ENCODE measurements at regions of chr10 and their contacts with region 1.

Region 1: DNA sequence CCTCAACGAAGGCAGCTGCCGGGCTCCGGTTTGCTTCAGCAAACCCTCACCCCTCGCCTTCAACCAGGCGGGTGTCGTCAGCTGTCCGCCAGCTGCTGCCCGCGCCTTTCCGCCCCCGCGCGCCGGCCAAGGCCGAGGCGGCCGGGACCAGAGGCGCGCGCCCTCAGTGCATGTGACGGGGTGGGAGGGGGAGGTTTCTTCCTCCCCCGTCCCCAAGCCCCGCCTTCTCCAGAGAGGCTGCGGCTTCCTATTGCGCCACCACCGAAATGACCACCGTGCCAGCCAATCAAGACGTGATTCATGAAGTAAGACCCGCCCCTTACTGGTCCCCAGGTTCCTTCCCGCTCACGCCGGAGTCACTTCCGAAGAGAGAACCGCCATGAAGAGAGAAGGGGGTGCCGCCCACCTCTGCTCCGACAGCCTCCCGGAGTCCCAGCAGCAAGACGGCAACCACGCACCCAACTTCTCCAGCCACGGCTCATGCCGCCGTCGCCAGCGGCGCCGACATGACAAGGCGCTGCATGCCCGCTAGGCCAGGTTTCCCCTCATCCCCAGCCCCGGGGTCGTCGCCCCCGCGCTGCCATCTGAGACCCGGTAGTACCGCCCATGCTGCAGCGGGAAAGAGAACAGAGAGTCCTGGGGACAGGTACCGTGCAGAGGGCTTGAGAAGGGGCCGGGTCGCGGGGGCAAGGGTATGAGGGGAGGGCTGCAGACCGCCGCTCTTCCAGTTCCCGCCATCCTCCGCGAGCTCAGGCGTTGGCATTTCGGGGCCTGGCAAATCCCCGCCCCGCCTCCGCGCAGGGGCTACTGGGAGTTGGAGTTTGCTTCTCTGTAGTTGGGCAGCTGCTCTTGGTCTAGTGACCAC is at the start of gene SLF2:
- DNase-seq: peak; percentile 99
- H3K4me3 ChIP-seq: peak within 1 kb of the TSS; percentile 86
- H3K27ac ChIP-seq: peak within 1 kb of the TSS; percentile 84
- H3K4me1 ChIP-seq: peaks cover 31% of the 10 kb centered on the region
- H3K27me3 ChIP-seq: no peaks in the 10 kb centered on the region
- CTCF ChIP-seq: no peak
- total RNA-seq, gene SLF2: 34.6 and 39.4 TPM in 2 replicates

Region 2: GRCh38 chr10:100890673-100891317 is 22.0 kb before region 1 on chr10:
- CTCF ChIA-PET with region 1: no interaction called
- POLR2A ChIA-PET with region 1: no interaction called
- intact Hi-C with region 1: loop called (anchors 1 kb)
- DNase-seq: peak; percentile 97
- H3K4me3 ChIP-seq: no peak overlapping the region
- H3K27ac ChIP-seq: peak overlapping the region; percentile 70
- H3K4me1 ChIP-seq: peaks cover 35% of the 10 kb centered on the region
- H3K27me3 ChIP-seq: no peaks in the 10 kb centered on the region
- CTCF ChIP-seq: no peak